CD4-positive, alpha-beta T cell (primary cell): ENCODE measurements at regions of chr16 and their contacts with region 1.

Region 1: GRCh38 chr16:70467113-70468034 is 13.0 kb downstream of the FCSK start:
- DNase-seq: no peak
- ATAC-seq: no peak
- H3K4me3 ChIP-seq: no peak overlapping the region
- H3K4me3 Mint-ChIP-seq: no peak overlapping the region
- H3K27ac ChIP-seq: no peak overlapping the region
- H3K27ac Mint-ChIP-seq: no peak overlapping the region
- H3K4me1 ChIP-seq: no peaks in the 10 kb centered on the region
- H3K4me1 Mint-ChIP-seq: no peaks in the 10 kb centered on the region
- H3K27me3 ChIP-seq: no peaks in the 10 kb centered on the region
- H3K27me3 Mint-ChIP-seq: no peaks in the 10 kb centered on the region
- CTCF ChIP-seq: no peak

Region 2: DNA sequence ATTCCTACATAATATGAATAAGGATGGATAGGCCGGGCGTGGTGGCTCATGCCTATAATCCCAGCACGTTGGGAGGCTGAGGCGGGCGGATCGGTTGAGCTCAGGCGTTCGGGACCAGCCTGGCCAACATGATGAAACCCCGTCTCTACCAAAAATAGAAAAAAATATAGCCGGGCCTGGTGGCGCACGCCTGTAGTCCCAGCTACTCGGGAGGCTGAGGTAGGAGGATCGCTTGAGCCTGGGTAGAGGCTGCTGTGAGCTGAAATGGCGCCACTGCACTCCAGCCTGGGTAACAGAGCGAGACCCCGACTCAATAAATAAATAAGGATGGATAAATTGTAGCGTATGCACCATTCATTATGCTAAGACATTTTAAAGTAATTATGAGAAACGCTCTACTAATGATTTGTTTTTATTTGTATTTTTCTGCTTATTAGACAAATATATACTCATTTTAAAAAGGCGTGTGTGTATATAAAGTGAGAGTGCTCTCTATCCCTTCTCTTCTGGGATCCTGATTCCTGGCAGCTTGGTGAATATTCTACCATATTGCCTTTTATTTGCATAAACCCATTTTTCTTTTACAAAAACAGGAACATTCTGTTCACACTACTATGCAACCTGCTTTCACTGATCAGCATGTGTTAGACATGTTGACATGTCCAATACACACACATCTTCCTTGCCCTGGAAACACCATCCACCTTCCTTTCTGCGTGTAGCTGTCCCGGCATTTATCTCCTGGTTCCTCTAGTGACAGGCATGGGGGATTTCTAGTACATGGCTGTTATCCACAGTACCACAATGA is 94.2 kb before region 1 on chr16:
- CTCF ChIA-PET with region 1: no interaction called
- POLR2A ChIA-PET with region 1: no interaction called
- intact Hi-C with region 1: loop called in 1 of 2 experiments (anchors 5 kb)
- DNase-seq: no peak
- ATAC-seq: no peak
- H3K4me3 ChIP-seq: no peak overlapping the region
- H3K4me3 Mint-ChIP-seq: no peak overlapping the region
- H3K27ac ChIP-seq: no peak overlapping the region
- H3K27ac Mint-ChIP-seq: no peak overlapping the region
- H3K4me1 ChIP-seq: peaks cover 8% of the 10 kb centered on the region
- H3K4me1 Mint-ChIP-seq: peaks cover 11% of the 10 kb centered on the region
- H3K27me3 ChIP-seq: no peaks in the 10 kb centered on the region
- H3K27me3 Mint-ChIP-seq: no peaks in the 10 kb centered on the region
- CTCF ChIP-seq: no peak

Region 3: GRCh38 chr16:70395345-70395901 is 72.0 kb before region 1 on chr16:
- CTCF ChIA-PET with region 1: no interaction called
- POLR2A ChIA-PET with region 1: no interaction called
- intact Hi-C with region 1: loop called in 1 of 2 experiments (anchors 5 kb)
- DNase-seq: peak; percentile 36 to 78 (median 56)
- ATAC-seq: peak; percentile 73
- H3K4me3 ChIP-seq: no peak overlapping the region
- H3K4me3 Mint-ChIP-seq: no peak overlapping the region
- H3K27ac ChIP-seq: no peak overlapping the region
- H3K27ac Mint-ChIP-seq: no peak overlapping the region
- H3K4me1 ChIP-seq: peaks cover 10% of the 10 kb centered on the region
- H3K4me1 Mint-ChIP-seq: no peaks in the 10 kb centered on the region
- H3K27me3 ChIP-seq: no peaks in the 10 kb centered on the region
- H3K27me3 Mint-ChIP-seq: no peaks in the 10 kb centered on the region
- CTCF ChIP-seq: peak; percentile 59

Region 4: DNA sequence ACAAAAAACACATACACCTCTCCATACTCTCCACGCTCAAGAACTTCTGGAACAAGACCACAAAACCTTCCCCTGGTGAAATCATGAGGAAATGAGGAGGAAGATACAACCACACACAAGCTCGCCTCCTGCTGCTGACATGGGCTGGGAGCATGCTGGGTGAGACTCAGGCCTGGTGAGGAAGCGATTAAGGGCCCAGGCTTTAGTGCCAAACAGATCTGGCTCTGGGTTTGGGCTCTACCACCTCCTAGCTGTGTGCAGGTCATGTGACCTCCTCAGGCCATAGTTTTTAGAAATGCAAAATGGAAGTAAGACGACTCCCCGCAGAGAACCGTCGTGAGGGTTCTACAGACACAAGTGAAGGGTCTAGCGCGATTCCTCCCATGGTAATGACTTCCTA is 292.3 kb after region 1 on chr16:
- CTCF ChIA-PET with region 1: no interaction called
- POLR2A ChIA-PET with region 1: no interaction called
- intact Hi-C with region 1: no loop called
- DNase-seq: no peak
- ATAC-seq: no peak
- H3K4me3 ChIP-seq: no peak overlapping the region
- H3K4me3 Mint-ChIP-seq: no peak overlapping the region
- H3K27ac ChIP-seq: no peak overlapping the region
- H3K27ac Mint-ChIP-seq: no peak overlapping the region
- H3K4me1 ChIP-seq: no peaks in the 10 kb centered on the region
- H3K4me1 Mint-ChIP-seq: no peaks in the 10 kb centered on the region
- H3K27me3 ChIP-seq: no peaks in the 10 kb centered on the region
- H3K27me3 Mint-ChIP-seq: no peaks in the 10 kb centered on the region
- CTCF ChIP-seq: no peak